Activated CD4-positive, alpha-beta memory T cell treated with anti-CD3 and anti-CD28 coated beads for 36 hours (primary cell): ENCODE measurements at regions of chr6 and their contacts with region 1.

Region 1: DNA sequence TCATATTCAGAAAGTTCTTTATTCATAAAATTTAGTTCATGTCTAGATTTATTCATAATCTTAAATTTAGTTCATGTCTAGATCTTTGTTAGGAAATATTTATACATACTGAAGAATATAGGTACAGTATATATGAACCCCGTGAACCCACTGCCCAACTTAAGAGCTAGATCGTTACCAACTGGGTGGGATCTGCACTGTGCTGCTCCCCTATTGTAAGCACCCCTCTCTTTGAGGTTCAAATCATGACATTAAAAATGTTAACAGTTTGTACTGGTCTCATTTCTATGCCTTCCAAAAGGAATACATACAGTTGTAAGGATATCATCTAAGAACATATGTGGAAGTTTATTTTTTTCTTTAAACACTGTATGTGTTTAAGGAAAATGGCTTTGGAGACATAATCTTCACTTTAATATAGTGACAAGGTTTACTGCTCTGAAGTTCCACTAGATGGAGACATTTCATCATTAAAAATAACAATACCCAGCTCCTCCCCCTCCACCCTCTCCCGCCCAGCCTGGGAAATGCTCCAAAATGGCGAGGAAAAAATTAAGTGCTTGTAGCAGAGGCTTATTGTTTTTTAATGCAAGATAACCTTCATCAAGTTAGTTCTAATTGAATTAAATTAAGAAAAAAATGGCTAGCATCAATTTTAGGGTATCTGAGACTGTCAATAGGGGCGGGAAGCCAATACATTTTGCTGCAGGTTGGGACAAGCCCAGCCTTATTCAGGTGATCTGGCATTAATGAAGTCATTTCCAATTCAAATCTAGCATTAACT is 104.1 kb upstream of the TRAF3IP2 start:
- DNase-seq: peak; percentile 68
- H3K4me3 Mint-ChIP-seq: no peak overlapping the region
- H3K27ac Mint-ChIP-seq: peak overlapping the region; percentile 74
- H3K4me1 Mint-ChIP-seq: peaks cover 53% of the 10 kb centered on the region
- H3K27me3 Mint-ChIP-seq: no peaks in the 10 kb centered on the region

Region 2: DNA sequence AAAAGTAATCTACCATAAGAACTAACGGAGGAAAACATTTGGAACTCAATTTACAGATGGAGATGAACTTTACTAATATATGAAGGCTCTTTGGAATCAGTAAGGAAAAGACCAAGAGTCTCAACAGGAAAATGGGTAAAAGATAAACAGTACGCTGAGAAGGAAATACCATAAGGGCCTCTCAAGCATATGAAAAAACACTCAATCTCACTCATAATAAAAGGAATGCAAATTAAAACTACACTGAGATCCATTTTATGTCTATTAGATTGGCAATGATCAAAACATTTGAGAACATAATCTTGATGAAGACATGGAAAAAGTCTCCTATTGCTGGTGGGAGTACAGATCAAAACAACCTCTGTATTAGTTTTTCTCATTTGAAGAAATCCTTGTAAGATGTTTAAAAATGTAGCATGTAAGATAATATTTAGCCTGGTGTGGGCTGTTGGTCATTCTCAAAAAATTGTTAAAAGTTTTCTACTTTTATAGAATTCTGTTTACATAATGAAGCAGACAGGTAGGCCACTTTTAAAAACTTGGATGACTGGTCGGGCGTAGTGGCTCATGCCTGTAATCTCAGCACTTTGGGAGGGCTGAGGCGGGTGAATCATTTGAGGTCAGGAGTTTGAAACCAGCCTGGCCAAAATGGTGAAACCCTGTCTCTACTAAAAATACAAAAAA is 241.3 kb before region 1 on chr6:
- CTCF ChIA-PET with region 1: no interaction called
- POLR2A ChIA-PET with region 1: no interaction called
- intact Hi-C with region 1: no loop called
- DNase-seq: peak; percentile 45
- H3K4me3 Mint-ChIP-seq: no peak overlapping the region
- H3K27ac Mint-ChIP-seq: no peak overlapping the region
- H3K4me1 Mint-ChIP-seq: peaks cover 36% of the 10 kb centered on the region
- H3K27me3 Mint-ChIP-seq: no peaks in the 10 kb centered on the region

Region 3: DNA sequence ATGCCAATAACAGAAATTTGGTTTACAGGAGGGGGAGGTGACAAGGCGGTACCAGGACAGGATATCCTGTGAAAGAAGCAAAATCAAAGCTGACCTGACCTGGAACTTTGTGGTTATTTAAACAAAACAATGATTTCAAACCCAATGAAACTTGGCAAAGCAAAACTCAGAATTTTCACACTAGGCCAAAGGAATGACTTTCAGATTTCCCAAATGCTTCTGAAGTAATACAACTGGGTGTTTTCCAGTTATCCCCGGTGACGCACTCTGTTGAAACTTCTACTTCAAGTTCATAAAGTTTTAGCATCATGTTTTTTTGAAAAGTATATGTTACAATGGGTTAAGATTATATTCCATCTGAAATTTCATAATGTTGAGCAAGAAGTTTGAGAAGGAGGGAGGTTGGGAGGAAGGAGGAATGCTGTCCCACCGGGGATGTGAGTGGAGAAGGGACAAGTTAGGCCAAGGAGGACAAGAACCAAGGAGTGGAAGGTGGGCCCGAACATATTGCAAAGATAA is 26.0 kb before region 1 on chr6:
- CTCF ChIA-PET with region 1: no interaction called
- POLR2A ChIA-PET with region 1: no interaction called
- intact Hi-C with region 1: no loop called
- DNase-seq: no peak
- H3K4me3 Mint-ChIP-seq: no peak overlapping the region
- H3K27ac Mint-ChIP-seq: peak overlapping the region; percentile 72
- H3K4me1 Mint-ChIP-seq: peaks cover 80% of the 10 kb centered on the region
- H3K27me3 Mint-ChIP-seq: no peaks in the 10 kb centered on the region

Region 4: GRCh38 chr6:111804627-111805235 is 94.9 kb after region 1 on chr6:
- CTCF ChIA-PET with region 1: interaction called, 4 read pairs
- POLR2A ChIA-PET with region 1: interaction called, 3 read pairs
- intact Hi-C with region 1: loop called (anchors 2 kb)
- DNase-seq: peak; percentile 86
- H3K4me3 Mint-ChIP-seq: peak overlapping the region; percentile 59
- H3K27ac Mint-ChIP-seq: peak overlapping the region; percentile 91
- H3K4me1 Mint-ChIP-seq: peaks cover 94% of the 10 kb centered on the region
- H3K27me3 Mint-ChIP-seq: no peaks in the 10 kb centered on the region

Region 5: DNA sequence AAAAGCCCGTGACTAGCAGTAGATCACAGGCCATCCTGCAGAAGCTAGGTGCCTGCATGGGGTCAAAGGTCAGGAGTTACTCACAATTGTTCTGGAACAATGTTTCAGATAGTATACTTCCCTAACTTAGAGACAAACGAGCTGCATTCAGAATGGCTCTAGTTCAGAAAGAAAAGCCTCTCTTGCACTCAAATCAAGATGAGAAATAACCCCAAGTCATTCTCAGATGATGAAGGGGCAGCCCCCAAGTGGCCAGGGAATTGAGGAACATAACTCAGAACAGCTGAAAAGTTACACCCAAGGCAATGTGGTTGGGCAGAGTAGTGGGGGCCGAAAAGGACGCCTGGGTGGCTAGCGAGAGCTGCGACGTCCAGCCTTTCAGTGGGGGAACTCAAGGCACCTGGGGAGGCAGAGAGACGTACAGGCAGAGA is 135.6 kb after region 1 on chr6:
- CTCF ChIA-PET with region 1: interaction called, 10 read pairs
- POLR2A ChIA-PET with region 1: no interaction called
- intact Hi-C with region 1: no loop called
- DNase-seq: peak; percentile 56
- H3K4me3 Mint-ChIP-seq: peak overlapping the region; percentile 14
- H3K27ac Mint-ChIP-seq: peak overlapping the region; percentile 86
- H3K4me1 Mint-ChIP-seq: peaks cover 62% of the 10 kb centered on the region
- H3K27me3 Mint-ChIP-seq: no peaks in the 10 kb centered on the region

Region 6: GRCh38 chr6:111997078-111997852 is 287.5 kb after region 1 on chr6:
- CTCF ChIA-PET with region 1: interaction called, 28 read pairs
- POLR2A ChIA-PET with region 1: no interaction called
- intact Hi-C with region 1: loop called (anchors 1 kb)
- DNase-seq: peak; percentile 87
- H3K4me3 Mint-ChIP-seq: peak overlapping the region; percentile 48
- H3K27ac Mint-ChIP-seq: peak overlapping the region; percentile 28
- H3K4me1 Mint-ChIP-seq: peaks cover 48% of the 10 kb centered on the region
- H3K27me3 Mint-ChIP-seq: no peaks in the 10 kb centered on the region

Region 7: GRCh38 chr6:112038268-112038667 is 328.5 kb after region 1 on chr6:
- CTCF ChIA-PET with region 1: interaction called, 49 read pairs
- POLR2A ChIA-PET with region 1: interaction called, 5 read pairs
- intact Hi-C with region 1: loop called (anchors 1 kb)
- DNase-seq: no peak
- H3K4me3 Mint-ChIP-seq: no peak overlapping the region
- H3K27ac Mint-ChIP-seq: no peak overlapping the region
- H3K4me1 Mint-ChIP-seq: peaks cover 62% of the 10 kb centered on the region
- H3K27me3 Mint-ChIP-seq: no peaks in the 10 kb centered on the region